Heart left ventricle (tissue), 16 donors: ENCODE measurements at regions of chr16 and their contacts with region 1.

Region 1: DNA sequence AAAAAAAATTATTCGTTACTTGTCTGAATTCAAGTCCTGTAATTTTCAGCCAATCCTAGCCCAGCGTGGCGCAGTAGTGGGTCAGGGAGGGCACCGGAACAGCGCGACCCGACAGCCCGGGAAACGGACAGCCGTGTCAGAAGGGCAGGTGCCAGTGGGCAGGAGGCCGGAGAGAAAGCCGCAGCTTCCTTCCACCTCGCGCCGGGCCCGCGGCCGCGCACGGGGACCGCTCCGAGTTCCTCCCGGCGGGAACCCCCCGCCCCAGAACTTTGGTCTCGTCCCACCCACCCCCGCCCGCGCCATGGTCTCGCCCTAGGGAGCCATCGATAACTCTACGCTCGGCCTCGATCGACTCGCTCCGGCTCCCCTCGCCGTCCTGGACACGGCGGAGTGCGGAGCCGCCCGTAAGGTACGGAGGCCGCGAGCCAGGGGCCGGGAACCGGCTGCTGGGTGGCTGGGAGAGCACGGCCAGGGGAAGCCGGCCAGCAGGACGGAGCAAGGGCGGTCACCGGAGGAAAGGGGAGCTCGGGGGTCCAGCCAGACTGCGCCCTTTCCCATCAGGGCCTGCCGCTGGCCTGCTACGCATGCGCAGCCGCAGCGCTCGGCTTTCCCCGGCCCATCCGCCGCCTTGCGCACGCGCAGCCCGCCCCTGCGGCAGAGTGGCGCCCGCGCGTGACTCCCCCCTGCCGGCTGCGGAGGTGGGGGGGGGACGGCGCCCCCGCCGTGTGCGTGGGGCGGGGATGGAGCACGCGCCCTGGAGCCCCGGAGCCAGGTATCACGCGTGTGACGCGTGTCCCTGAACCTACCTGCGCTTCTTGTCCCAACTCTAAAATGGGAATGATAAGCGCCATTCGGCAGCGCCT is at the start of gene MLST8:
- DNase-seq: peak; percentile 85 to 96 (median 89)
- ATAC-seq: peak; percentile 53 to 84 (median 82)
- H3K4me3 ChIP-seq: peak within 1 kb of the TSS; percentile 66 to 96 (median 80)
- H3K27ac ChIP-seq: peak within 1 kb of the TSS; percentile 95 to 100 (median 99)
- H3K4me1 ChIP-seq: peaks cover 3 to 27% (median 15%) of the 10 kb centered on the region in 12 donors
- H3K27me3 ChIP-seq: no peaks in the 10 kb centered on the region
- CTCF ChIP-seq: peak in 6 of 12 donors; percentile 13 to 43 (median 28)
- POLR2A ChIP-seq: peak; percentile 49 to 73
- total RNA-seq, gene MLST8: 19.8 to 49.0 (median 22.8) TPM

Region 2: GRCh38 chr16:2160915-2161551 is 44.3 kb before region 1 on chr16:
- intact Hi-C with region 1: loop called in 5 of 10 experiments (anchors 5 to 10 kb)
- DNase-seq: peak in 3 of 5 donors; percentile 50 to 82 (median 73)
- ATAC-seq: peak; percentile 8 to 66 (median 34)
- H3K4me3 ChIP-seq: peak overlapping the region in 2 of 12 donors; percentile 19 to 28
- H3K27ac ChIP-seq: peak overlapping the region in 10 of 12 donors; percentile 27 to 90 (median 46)
- H3K4me1 ChIP-seq: peaks cover 10 to 55% (median 31%) of the 10 kb centered on the region in 12 donors
- H3K27me3 ChIP-seq: no peaks in the 10 kb centered on the region
- CTCF ChIP-seq: no peak
- POLR2A ChIP-seq: no peak

Region 3: GRCh38 chr16:2278272-2278608 is 72.9 kb after region 1 on chr16:
- intact Hi-C with region 1: no loop called
- DNase-seq: no peak
- ATAC-seq: no peak
- H3K4me3 ChIP-seq: no peak overlapping the region
- H3K27ac ChIP-seq: no peak overlapping the region
- H3K4me1 ChIP-seq: peaks cover 0 to 3% (median 0%) of the 10 kb centered on the region in 12 donors
- H3K27me3 ChIP-seq: no peaks in the 10 kb centered on the region
- CTCF ChIP-seq: no peak
- POLR2A ChIP-seq: no peak

Region 4: DNA sequence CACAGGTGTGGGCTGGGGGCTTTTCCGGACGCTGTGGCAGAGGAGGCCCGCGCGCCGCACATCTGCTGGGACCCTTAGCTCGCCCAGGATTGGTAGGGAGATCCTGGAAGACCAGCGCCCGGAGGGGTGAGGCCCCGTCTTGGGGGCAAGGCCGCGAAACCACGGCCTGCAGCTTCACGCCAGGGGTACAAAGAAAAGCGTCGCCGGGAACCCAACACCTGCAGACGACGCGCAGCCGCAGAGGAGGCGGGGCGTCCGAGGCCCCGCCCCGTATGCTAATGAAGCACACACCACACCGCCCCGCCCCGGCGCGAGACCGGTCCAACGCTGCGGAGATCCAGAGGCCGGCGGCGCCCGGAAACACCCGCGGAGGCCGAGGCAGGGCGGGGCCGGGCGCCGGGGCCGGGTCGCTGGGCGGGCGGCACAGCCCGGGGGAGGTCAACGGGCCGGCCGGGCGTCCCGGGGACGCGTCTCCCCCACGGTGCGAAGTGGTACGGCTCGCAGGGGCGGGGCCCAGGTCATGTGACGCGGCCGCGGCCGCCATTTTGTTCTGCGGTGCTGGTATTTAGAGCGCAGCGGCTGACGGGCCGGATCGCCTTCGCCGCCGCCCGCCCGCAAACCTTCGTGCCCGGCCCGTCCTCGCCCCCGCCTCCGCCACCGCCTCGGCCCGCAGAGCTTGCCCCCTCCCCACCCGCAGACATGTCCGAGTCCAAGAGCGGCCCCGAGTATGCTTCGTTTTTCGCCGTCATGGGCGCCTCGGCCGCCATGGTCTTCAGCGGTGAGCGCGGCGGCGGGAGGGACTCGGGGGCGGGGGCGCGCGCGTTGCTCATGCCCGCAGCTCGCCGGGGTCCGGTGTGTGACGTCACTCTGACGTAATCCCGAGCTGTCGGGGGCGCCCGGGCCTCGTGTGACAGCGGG is 308.3 kb after region 1 on chr16 and contains the start of gene ATP6V0C:
- intact Hi-C with region 1: no loop called
- DNase-seq: peak; percentile 91 to 96 (median 92)
- ATAC-seq: peak; percentile 71 to 90 (median 88)
- H3K4me3 ChIP-seq: peak within 1 kb of the TSS; percentile 87 to 100 (median 96)
- H3K27ac ChIP-seq: peak within 1 kb of the TSS; percentile 93 to 99 (median 95)
- H3K4me1 ChIP-seq: peaks cover 11 to 80% (median 44%) of the 10 kb centered on the region in 12 donors
- H3K27me3 ChIP-seq: no peaks in the 10 kb centered on the region
- CTCF ChIP-seq: no peak
- POLR2A ChIP-seq: peak; percentile 10 to 90
- total RNA-seq, gene ATP6V0C: 61.6 to 209 (median 129) TPM